Natural killer cell (primary cell): ENCODE measurements at regions of chr1 and their contacts with region 1.

Region 1: GRCh38 chr1:89276690-89277089 is 4.0 kb upstream of the GBP5 start:
- DNase-seq: peak in 1 of 2 donors; percentile 70
- ATAC-seq: no peak
- H3K4me3 ChIP-seq: no peak overlapping the region
- H3K4me3 Mint-ChIP-seq: no peak overlapping the region
- H3K27ac ChIP-seq: no peak overlapping the region
- H3K27ac Mint-ChIP-seq: peak overlapping the region; percentile 56 to 98
- H3K4me1 ChIP-seq: peaks cover 41% of the 10 kb centered on the region
- H3K4me1 Mint-ChIP-seq: peaks cover 72 to 76% of the 10 kb centered on the region in 2 donors
- H3K27me3 ChIP-seq: no peaks in the 10 kb centered on the region
- H3K27me3 Mint-ChIP-seq: no peaks in the 10 kb centered on the region
- CTCF ChIP-seq: no peak

Region 2: GRCh38 chr1:89310505-89310904 is 33.8 kb after region 1 on chr1:
- intact Hi-C with region 1: loop called (anchors 2 kb)
- DNase-seq: peak in 1 of 2 donors; percentile 47
- ATAC-seq: peak; percentile 80 to 85 (median 84)
- H3K4me3 ChIP-seq: no peak overlapping the region
- H3K4me3 Mint-ChIP-seq: peak overlapping the region; percentile 73
- H3K27ac ChIP-seq: peak overlapping the region; percentile 79
- H3K27ac Mint-ChIP-seq: peak overlapping the region; percentile 91 to 98
- H3K4me1 ChIP-seq: peaks cover 22% of the 10 kb centered on the region
- H3K4me1 Mint-ChIP-seq: peaks cover 40 to 45% of the 10 kb centered on the region in 2 donors
- H3K27me3 ChIP-seq: no peaks in the 10 kb centered on the region
- H3K27me3 Mint-ChIP-seq: no peaks in the 10 kb centered on the region
- CTCF ChIP-seq: no peak